GM12878 (cell line): ENCODE measurements at regions of chr19 and their contacts with region 1.

Region 1: DNA sequence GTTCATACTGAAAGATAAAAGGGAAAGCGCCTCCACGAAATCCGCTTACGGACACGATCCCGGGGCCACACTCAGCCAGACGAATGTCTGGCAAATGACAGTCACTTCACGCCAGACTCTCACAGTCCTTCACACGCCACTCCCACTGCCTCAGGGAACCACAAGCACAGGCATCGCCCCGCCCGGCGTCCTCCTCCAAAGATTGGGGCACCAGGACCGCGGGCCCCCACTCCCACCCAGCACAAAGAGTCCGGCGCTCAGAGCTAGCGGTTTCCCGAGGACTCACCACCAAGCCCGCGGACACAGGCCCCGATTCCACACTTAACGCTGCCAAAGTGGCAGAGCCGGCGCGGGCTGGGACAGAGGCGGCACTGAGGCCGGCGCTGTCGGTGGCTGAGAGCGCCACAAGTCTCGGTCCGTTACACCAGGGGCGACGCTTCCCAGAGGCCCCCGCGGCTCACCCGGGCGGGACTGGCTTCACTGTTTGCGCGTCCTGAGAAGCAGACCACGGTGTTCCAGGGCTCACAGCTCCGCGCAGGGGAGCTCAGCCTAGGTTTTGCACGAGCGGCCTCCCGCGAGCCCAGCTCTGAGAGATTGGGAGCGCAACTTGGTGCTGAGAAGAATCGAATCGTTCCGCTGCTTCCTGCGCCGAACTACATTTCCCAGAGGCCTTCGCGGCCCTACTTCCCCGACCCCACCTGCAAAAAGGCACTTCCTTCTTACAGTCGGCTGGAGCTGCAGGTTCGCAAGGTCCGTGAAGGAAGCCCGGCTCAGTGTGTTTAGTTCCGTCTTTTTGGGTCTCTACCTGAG is at the start of gene ZNF569:
- DNase-seq: peak; percentile 77
- ATAC-seq: peak; percentile 83
- H3K4me3 ChIP-seq: peak within 1 kb of the TSS; percentile 93
- H3K27ac ChIP-seq: peak within 1 kb of the TSS; percentile 81
- H3K4me1 ChIP-seq: peaks cover 4% of the 10 kb centered on the region
- H3K27me3 ChIP-seq: no peaks in the 10 kb centered on the region
- CTCF ChIP-seq: no peak
- EP300 ChIP-seq: 0 out of 4 replicates have a peak, but pooled peaks of 1 of the 2 experiments have one; percentile 16
- POLR2A ChIP-seq: peak; percentile 85
- RAD21 ChIP-seq: peak; percentile 5; the same call in 1 of the 2 replicates
- polyA plus RNA-seq, gene ZNF569: 0.82 to 1.1 TPM

Region 2: DNA sequence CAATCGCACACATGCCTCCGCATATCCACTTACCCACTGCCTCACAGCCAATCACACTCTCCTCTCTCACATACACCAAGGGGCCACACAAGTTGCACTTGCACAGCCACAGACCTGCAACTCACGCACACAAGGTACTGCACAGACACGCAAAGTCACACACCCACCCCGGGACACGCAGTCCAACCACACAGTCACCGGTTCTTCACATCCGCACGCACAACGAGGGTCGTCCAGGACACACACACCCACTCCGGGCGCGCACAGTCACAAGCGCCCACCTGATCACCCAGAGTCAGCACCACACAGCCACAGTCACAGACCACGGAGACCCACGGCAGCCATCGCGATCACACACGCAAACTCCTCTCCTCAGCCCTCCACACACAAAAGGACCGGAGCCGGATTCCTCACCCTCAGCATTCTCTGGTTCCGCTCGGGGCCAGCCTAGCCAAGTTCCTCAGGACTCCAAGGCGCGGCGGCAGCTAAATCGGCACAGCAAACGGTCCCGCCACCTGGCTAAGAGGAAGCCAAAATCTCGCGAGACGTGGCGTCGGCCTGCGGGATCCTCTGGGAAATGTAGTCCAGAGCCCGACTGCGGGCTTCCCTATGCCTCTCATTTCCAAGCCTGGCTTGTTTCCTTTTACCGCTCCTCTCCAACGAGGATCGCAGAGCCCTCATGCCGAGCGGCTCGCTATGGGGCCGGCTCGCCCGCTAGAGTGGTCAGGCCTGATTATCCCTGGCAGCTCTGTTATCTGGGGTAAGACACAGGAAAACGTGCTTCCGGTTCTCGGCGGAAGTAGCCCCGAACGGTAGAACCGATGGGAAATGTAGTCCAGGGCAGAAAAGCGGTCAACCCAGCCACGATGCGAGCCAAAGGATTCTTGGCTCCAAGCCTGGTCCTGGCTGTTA is 694.4 kb before region 1 on chr19 and contains the start of gene ZNF850:
- CTCF ChIA-PET with region 1: no interaction called
- POLR2A ChIA-PET with region 1: no interaction called
- RAD21 ChIA-PET with region 1: no interaction called
- SMC1A ChIA-PET with region 1: no interaction called
- in situ Hi-C with region 1: no loop called
- intact Hi-C with region 1: loop called (anchors 5 kb)
- DNase-seq: peak; percentile 63
- ATAC-seq: peak; percentile 96
- H3K4me3 ChIP-seq: peak within 1 kb of the TSS; percentile 93
- H3K27ac ChIP-seq: peak within 1 kb of the TSS; percentile 74
- H3K4me1 ChIP-seq: 0 out of 2 replicates have a peak, but pooled peaks cover 4% of the 10 kb centered on the region
- H3K27me3 ChIP-seq: no peaks in the 10 kb centered on the region
- CTCF ChIP-seq: no peak
- EP300 ChIP-seq: no peak
- POLR2A ChIP-seq: peak; percentile 89
- RAD21 ChIP-seq: no peak
- polyA plus RNA-seq, gene ZNF850: 0.44 to 0.63 TPM

Region 3: GRCh38 chr19:37334179-37335071 is 132.6 kb before region 1 on chr19:
- CTCF ChIA-PET with region 1: no interaction called
- POLR2A ChIA-PET with region 1: no interaction called
- RAD21 ChIA-PET with region 1: no interaction called
- SMC1A ChIA-PET with region 1: no interaction called
- in situ Hi-C with region 1: no loop called
- intact Hi-C with region 1: loop called (anchors 5 kb)
- DNase-seq: peak; percentile 71
- ATAC-seq: peak; percentile 100
- H3K4me3 ChIP-seq: peak overlapping the region; percentile 76
- H3K27ac ChIP-seq: peak overlapping the region; percentile 81
- H3K4me1 ChIP-seq: peaks cover 7% of the 10 kb centered on the region
- H3K27me3 ChIP-seq: no peaks in the 10 kb centered on the region
- CTCF ChIP-seq: 0 out of 6 replicates have a peak, but pooled peaks of 1 of the 3 experiments have one; percentile 3
- EP300 ChIP-seq: no peak; a peak in 1 of 4 replicates
- POLR2A ChIP-seq: peak; percentile 81
- RAD21 ChIP-seq: no peak

Region 4: GRCh38 chr19:37370880-37371661 is 95.9 kb before region 1 on chr19 and contains the start of gene ZNF527:
- CTCF ChIA-PET with region 1: interaction called, 4 read pairs
- POLR2A ChIA-PET with region 1: interaction called, 11 read pairs
- RAD21 ChIA-PET with region 1: interaction called, 9 read pairs
- SMC1A ChIA-PET with region 1: interaction called, 4 read pairs
- in situ Hi-C with region 1: no loop called
- intact Hi-C with region 1: loop called (anchors 1 kb)
- DNase-seq: peak; percentile 91
- ATAC-seq: peak; percentile 99
- H3K4me3 ChIP-seq: peak within 1 kb of the TSS; percentile 72
- H3K27ac ChIP-seq: peak within 1 kb of the TSS; percentile 63
- H3K4me1 ChIP-seq: no peaks in the 10 kb centered on the region
- H3K27me3 ChIP-seq: no peaks in the 10 kb centered on the region
- CTCF ChIP-seq: no peak
- EP300 ChIP-seq: no peak
- POLR2A ChIP-seq: peak; percentile 92
- RAD21 ChIP-seq: no peak
- polyA plus RNA-seq, gene ZNF527: 2.0 to 2.2 TPM

Region 5: DNA sequence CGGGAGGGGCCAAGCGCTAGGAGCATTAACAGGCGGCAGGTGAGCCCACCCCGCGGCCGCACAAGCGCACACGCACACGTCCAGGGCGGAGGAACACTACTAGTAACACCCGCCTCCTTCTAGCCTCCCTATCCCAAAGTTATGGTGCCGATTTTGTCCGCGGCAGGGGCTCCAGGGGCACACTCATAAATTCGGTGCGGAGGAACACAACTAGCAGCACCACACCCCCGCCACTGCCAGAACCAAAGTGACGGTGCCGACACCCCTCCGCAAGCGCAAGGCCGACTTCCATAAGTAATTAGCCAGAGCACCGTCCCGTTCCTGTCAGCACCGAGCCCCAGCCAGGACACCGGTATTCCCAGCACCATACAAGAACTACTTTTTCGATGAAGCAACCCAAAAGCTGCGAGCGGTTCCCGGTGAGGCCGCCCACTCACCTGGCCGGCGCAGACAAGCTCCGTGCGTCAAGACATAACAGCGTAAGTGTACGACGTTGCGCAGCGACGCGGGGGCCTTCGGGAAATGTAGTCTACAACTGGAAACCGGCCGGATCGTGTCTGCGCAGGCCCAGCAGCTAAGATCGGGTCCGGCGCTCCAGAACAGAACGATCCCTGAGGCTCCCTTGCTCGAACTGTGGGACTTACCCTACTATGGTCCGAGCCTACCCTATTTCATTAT is 127.4 kb after region 1 on chr19 and contains the starts of genes ZNF540 and ZNF571:
- CTCF ChIA-PET with region 1: no interaction called
- POLR2A ChIA-PET with region 1: no interaction called
- RAD21 ChIA-PET with region 1: interaction called, 3 read pairs
- SMC1A ChIA-PET with region 1: no interaction called
- in situ Hi-C with region 1: no loop called
- intact Hi-C with region 1: loop called (anchors 5 kb)
- DNase-seq: peak; percentile 73
- ATAC-seq: peak; percentile 100
- H3K4me3 ChIP-seq: peak within 1 kb of the TSS; percentile 72
- H3K27ac ChIP-seq: peak within 1 kb of the TSS; percentile 70
- H3K4me1 ChIP-seq: 0 out of 2 replicates have a peak, but pooled peaks cover 3% of the 10 kb centered on the region
- H3K27me3 ChIP-seq: no peaks in the 10 kb centered on the region
- CTCF ChIP-seq: no peak
- EP300 ChIP-seq: no peak
- POLR2A ChIP-seq: peak; percentile 47; the same call in 1 of the 2 replicates
- RAD21 ChIP-seq: no peak
- polyA plus RNA-seq, gene ZNF540: 0.60 to 1.3 TPM
- polyA plus RNA-seq, gene ZNF571: 0.27 to 0.92 TPM

Region 6: DNA sequence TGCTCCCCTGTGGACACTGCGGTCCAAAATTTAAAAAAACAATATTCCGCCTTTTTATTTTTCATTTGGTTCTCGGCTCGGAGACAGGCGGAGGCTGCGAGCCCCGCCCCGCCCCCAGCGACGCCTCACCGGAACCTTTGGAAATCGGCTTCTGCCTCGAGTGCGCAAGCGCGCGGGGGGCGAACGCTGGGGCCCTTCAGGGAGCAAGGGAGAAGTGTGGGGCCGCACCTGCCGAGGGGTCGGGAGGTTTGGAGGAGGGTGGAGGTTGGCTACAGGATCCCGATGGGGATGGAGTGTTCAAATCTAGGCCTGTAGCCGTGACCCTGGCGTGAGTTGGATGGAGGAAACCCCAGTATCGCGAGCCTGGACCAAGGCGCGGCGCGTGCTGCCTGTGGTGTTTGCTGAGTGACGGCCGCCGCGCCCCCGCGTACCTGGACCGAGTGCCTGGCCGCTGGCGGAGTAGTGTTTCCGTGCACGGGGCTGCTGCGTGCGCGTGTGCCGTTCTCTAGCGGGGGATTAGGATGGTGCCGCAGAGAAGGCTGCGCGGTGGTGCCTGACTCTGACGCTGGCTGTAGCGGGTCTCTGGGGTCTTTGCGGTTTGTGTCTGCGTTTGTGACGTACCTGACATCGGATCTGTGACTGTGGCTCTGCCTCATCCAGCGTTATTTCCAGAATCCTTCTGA is 188.8 kb after region 1 on chr19:
- CTCF ChIA-PET with region 1: no interaction called
- POLR2A ChIA-PET with region 1: no interaction called
- RAD21 ChIA-PET with region 1: no interaction called
- SMC1A ChIA-PET with region 1: interaction called, 3 read pairs
- in situ Hi-C with region 1: no loop called
- intact Hi-C with region 1: loop called (anchors 5 kb)
- DNase-seq: peak; percentile 45
- ATAC-seq: peak; percentile 79
- H3K4me3 ChIP-seq: peak overlapping the region; percentile 80
- H3K27ac ChIP-seq: peak overlapping the region; percentile 85
- H3K4me1 ChIP-seq: no peaks in the 10 kb centered on the region
- H3K27me3 ChIP-seq: no peaks in the 10 kb centered on the region
- CTCF ChIP-seq: no peak
- EP300 ChIP-seq: 0 out of 4 replicates have a peak, but pooled peaks of 1 of the 2 experiments have one; percentile 25
- POLR2A ChIP-seq: peak; percentile 79
- RAD21 ChIP-seq: no peak